CD14-positive monocyte (primary cell): ENCODE measurements at regions of chr6 and their contacts with region 1.

Region 1: DNA sequence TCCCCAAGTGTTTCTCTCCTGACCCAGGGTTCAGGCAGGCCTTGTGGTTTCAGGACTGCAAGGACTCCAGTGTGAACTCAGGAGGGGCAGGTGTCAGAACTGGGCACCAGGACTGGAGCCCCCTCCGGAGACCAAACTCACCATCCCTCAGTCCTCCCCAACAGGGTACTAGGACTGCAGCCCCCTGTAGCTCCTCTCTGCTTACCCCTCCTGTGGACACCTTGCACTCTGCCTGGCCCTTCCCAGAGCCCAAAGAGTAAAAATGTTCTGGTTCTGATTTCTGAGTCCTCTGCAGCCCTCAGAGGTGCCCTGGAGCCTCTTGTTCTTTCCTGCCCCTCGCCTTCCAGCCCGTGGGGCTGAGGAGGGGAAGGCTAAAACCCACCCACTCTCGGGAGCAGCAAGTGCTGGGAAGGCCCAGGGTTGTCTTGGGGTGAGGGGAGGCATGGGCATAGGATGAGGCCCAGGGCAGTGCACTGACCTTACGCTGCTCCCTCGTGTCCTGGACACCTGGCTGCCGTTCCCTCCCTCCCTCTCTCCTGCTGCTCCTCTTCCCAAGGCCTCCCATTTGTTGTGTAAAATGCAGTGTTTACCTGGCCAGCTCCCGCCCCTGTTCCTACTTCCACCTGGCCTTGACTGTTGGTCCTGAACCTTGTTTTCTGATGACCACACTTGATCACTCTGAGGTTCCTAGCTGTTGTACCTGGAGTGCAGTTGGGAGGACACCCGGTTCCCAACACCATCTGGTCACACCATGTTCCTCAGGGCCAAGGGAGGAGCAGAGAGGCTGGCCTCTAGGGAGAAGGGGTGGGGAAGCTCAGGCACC is 9.9 kb downstream of the CNPY3 start:
- DNase-seq: no peak
- H3K4me3 ChIP-seq: no peak overlapping the region
- H3K4me3 Mint-ChIP-seq: no peak overlapping the region
- H3K27ac ChIP-seq: peak overlapping the region in 1 of 2 donors; percentile 41
- H3K27ac Mint-ChIP-seq: peak overlapping the region in 6 of 7 donors; percentile 2 to 82 (median 53)
- H3K4me1 ChIP-seq: peaks cover 14% of the 10 kb centered on the region in 2 donors
- H3K4me1 Mint-ChIP-seq: peaks cover 15% of the 10 kb centered on the region
- H3K27me3 ChIP-seq: no peaks in the 10 kb centered on the region
- H3K27me3 Mint-ChIP-seq: peaks cover 0 to 2% (median 1%) of the 10 kb centered on the region in 3 donors
- CTCF ChIP-seq: no peak

Region 2: DNA sequence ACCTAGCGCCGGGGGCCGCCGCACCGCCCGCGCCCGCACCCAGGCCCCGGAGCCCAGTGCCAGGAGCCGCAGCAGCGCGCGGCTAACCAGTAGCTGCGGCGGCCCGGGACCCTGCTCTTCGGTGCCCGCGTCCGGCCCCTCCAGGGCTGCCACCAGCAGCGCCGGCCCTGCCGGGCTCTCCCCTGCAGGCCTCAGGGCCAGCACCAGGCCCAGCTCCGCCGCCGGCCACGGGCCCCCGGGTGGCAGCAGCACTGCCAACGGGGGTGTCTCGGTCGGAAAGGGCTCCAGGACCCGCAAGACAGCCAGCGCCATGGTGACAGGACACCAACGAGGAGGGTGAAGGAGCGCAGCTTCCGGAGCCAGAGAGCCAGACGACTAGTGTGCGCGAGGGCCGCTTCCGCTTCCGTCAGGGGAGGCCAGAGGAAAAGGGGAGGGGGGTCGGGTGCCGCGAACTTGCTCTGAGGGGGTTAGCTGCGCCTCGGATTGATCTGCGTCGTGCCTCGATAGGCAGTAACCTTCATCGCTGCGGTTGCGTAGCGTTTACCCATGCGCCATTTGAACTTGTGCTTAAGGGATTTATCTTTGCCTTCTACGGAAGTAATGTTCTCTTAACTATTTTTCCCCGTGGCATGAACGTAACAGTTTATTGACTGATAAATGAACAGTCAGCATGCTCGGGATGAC is 39.8 kb after region 1 on chr6 and contains the start of gene PEX6:
- intact Hi-C with region 1: loop called (anchors 5 kb)
- DNase-seq: peak; percentile 72 to 84 (median 82)
- H3K4me3 ChIP-seq: peak within 1 kb of the TSS; percentile 70 to 92 (median 91)
- H3K4me3 Mint-ChIP-seq: peak within 1 kb of the TSS; percentile 94 to 96
- H3K27ac ChIP-seq: peak within 1 kb of the TSS; percentile 47 to 93
- H3K27ac Mint-ChIP-seq: peak within 1 kb of the TSS; percentile 89 to 96 (median 93)
- H3K4me1 ChIP-seq: peaks cover 28 to 31% of the 10 kb centered on the region in 2 donors
- H3K4me1 Mint-ChIP-seq: peaks cover 35% of the 10 kb centered on the region
- H3K27me3 ChIP-seq: no peaks in the 10 kb centered on the region
- H3K27me3 Mint-ChIP-seq: no peaks in the 10 kb centered on the region
- CTCF ChIP-seq: no peak
- polyA plus RNA-seq, gene PEX6: 10.6 to 16.2 (median 15.5) TPM